HepG2 (cell line): ENCODE measurements at regions of chr2 and their contacts with region 1.

Region 1: GRCh38 chr2:240640939-240641338 is 15.7 kb downstream of the GPR35 start:
- DNase-seq: peak; percentile 42
- ATAC-seq: peak; percentile 77
- H3K4me3 ChIP-seq: no peak overlapping the region
- H3K27ac ChIP-seq: no peak overlapping the region
- H3K4me1 ChIP-seq: no peaks in the 10 kb centered on the region
- H3K27me3 ChIP-seq: peaks cover 42 to 73% of the 10 kb centered on the region in 2 experiments
- CTCF ChIP-seq: peak; percentile 90
- EP300 ChIP-seq: no peak
- POLR2A ChIP-seq: no peak
- RAD21 ChIP-seq: peak; percentile 75

Region 2: DNA sequence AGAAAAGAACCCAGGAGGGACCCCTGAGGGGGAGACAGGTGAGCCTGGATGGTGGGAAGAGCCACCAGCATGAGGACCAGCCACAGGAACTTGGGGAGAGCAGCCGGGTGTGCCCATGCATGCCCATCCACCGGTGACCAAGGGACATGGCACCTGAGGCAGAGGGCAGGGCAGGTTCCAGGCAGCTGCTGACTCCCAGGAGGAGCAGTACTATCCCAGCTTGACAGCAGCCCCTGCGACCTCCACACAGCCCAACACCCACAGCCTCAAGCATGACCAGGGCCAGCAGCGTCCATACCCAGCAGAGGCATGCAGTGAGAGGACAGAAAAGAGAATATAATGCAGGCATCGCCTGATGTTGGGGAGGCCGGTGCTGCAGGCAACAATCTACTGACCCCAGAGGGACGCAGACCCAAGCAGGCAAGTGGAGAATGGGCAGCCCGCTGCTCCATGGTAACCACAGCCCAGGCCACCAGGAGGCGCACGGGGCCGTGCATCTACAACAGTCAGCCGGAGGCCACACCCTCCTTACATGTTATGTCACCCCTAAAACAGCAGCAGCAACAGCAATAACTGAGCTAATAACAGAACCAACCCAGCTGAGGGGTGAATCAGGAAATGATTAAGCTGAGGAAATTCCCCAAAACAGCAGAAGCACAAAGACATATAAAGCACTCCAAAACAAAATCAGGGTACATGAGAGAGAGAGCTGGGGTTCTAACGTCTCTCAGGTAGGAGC is 127.2 kb before region 1 on chr2:
- CTCF ChIA-PET with region 1: no interaction called
- POLR2A ChIA-PET with region 1: no interaction called
- in situ Hi-C with region 1: no loop called
- intact Hi-C with region 1: loop called (anchors 10 kb)
- DNase-seq: peak; percentile 72
- ATAC-seq: peak; percentile 96
- H3K4me3 ChIP-seq: no peak overlapping the region
- H3K27ac ChIP-seq: no peak overlapping the region
- H3K4me1 ChIP-seq: no peaks in the 10 kb centered on the region
- H3K27me3 ChIP-seq: no peaks in the 10 kb centered on the region
- CTCF ChIP-seq: peak; percentile 98
- EP300 ChIP-seq: no peak
- POLR2A ChIP-seq: no peak
- RAD21 ChIP-seq: peak; percentile 86

Region 3: GRCh38 chr2:240595496-240596470 is 45.2 kb before region 1 on chr2:
- CTCF ChIA-PET with region 1: no interaction called
- POLR2A ChIA-PET with region 1: no interaction called
- in situ Hi-C with region 1: no loop called
- intact Hi-C with region 1: loop called (anchors 1 kb)
- DNase-seq: peak; percentile 64
- ATAC-seq: peak; percentile 62
- H3K4me3 ChIP-seq: no peak overlapping the region
- H3K27ac ChIP-seq: peak overlapping the region; percentile 94
- H3K4me1 ChIP-seq: peaks cover 33% of the 10 kb centered on the region
- H3K27me3 ChIP-seq: no peaks in the 10 kb centered on the region
- CTCF ChIP-seq: peak; percentile 89
- EP300 ChIP-seq: no peak
- POLR2A ChIP-seq: no peak
- RAD21 ChIP-seq: peak; percentile 67

Region 4: GRCh38 chr2:240622531-240623235 is 18.3 kb before region 1 on chr2:
- CTCF ChIA-PET with region 1: no interaction called
- POLR2A ChIA-PET with region 1: no interaction called
- in situ Hi-C with region 1: no loop called
- intact Hi-C with region 1: no loop called
- DNase-seq: no peak
- ATAC-seq: no peak
- H3K4me3 ChIP-seq: no peak overlapping the region
- H3K27ac ChIP-seq: no peak overlapping the region
- H3K4me1 ChIP-seq: peaks cover 32% of the 10 kb centered on the region
- H3K27me3 ChIP-seq: no peaks in the 10 kb centered on the region; a peak in 1 of 5 replicates
- CTCF ChIP-seq: no peak
- EP300 ChIP-seq: no peak
- POLR2A ChIP-seq: no peak
- RAD21 ChIP-seq: no peak

Region 5: DNA sequence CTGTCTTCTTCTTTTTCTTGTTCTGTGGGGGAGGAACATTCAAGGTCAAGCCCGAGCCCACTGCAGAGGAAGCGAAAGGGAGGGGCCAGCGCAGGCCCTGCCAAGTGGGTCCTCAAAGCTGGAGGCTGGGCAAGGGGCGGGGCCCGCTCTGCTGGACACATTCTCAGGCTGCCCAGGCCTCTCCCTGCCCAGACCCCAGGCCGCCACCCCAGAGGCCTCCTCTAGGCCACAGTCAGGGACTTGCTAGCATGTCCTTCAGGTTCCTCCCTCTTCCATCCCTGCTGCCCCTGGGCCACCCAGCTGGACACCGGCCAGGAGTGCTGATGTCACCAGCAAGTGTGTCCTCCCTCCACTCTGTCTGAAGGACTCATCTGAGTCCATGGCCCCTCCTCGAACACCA is 135.0 kb after region 1 on chr2:
- CTCF ChIA-PET with region 1: no interaction called
- POLR2A ChIA-PET with region 1: no interaction called
- in situ Hi-C with region 1: no loop called
- intact Hi-C with region 1: no loop called
- DNase-seq: no peak
- ATAC-seq: no peak; the same call in 2 of the 3 replicates
- H3K4me3 ChIP-seq: no peak overlapping the region
- H3K27ac ChIP-seq: no peak overlapping the region
- H3K4me1 ChIP-seq: no peaks in the 10 kb centered on the region
- H3K27me3 ChIP-seq: peaks cover 25 to 86% of the 10 kb centered on the region in 2 experiments; a peak in 4 of 5 replicates
- CTCF ChIP-seq: no peak
- EP300 ChIP-seq: no peak
- POLR2A ChIP-seq: no peak
- RAD21 ChIP-seq: no peak